Stomach (tissue), 19 donors: ENCODE measurements at regions of chr6 and their contacts with region 1.

Region 1: DNA sequence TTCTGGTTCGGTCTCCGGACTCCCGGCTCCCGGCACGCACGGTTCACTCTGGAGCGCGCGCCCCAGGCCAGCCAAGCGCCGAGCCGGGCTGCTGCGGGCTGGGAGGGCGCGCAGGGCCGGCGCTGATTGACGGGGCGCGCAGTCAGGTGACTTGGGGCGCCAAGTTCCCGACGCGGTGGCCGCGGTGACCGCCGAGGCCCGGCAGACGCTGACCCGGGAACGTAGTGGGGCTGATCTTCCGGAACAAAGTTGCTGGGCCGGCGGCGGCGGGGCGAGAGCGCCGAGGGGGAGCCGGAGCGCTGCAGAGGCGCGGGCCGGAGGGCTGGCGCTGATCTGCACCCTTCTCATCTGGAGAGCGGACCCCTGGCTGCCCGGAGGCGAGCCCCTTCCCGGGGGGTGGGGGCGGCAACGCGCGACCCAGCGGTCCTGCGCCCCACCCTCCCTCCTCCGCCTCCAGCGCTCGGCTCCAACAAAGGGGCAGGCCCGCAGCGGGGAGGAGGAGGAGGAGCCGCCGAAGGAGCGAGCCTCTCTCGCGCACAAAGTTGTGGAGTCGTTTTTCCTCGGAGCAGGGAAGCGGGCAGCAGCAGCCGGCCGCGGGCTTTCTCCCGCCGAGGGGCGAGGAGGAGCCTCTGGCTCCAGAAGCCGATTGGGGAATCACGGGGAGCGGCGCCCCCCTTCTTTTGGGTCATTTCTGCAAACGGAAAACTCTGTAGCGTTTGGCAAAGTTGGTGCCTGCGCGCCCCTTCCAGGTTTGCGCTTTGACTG is at the start of gene UTRN:
- DNase-seq: peak; percentile 75 to 93
- H3K4me3 ChIP-seq: peak within 1 kb of the TSS; percentile 73 to 91 (median 81)
- H3K27ac ChIP-seq: peak within 1 kb of the TSS; percentile 87 to 98 (median 96)
- H3K4me1 ChIP-seq: peaks cover 8 to 27% (median 18%) of the 10 kb centered on the region in 4 donors
- H3K27me3 ChIP-seq: no peaks in the 10 kb centered on the region
- CTCF ChIP-seq: no peak
- EP300 ChIP-seq: no peak
- POLR2A ChIP-seq: no peak
- total RNA-seq, gene UTRN: 60.3 to 218 (median 190) TPM

Region 2: DNA sequence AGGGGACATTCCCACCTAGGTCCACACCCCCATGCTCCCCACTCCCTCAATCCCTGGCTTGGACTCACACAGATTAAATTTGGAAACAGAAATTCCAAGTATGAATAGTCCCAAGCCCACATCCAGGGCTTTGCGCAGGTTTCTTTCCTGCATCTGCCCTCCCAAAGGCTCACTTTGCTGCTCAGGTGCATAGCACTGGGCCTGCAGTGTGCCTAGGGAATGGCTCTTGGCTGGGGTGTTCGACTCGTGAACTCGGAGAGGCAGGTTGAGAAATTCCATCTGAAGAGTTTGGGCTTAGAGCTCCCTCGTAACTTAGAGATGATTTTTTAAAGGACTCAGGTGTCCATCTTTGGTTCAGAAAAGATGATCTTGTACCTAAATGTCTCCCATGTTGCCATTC is 174.8 kb before region 1 on chr6:
- intact Hi-C with region 1: no loop called
- DNase-seq: no peak
- H3K4me3 ChIP-seq: no peak overlapping the region
- H3K27ac ChIP-seq: no peak overlapping the region
- H3K4me1 ChIP-seq: no peaks in the 10 kb centered on the region
- H3K27me3 ChIP-seq: no peaks in the 10 kb centered on the region
- CTCF ChIP-seq: no peak
- EP300 ChIP-seq: no peak
- POLR2A ChIP-seq: no peak

Region 3: DNA sequence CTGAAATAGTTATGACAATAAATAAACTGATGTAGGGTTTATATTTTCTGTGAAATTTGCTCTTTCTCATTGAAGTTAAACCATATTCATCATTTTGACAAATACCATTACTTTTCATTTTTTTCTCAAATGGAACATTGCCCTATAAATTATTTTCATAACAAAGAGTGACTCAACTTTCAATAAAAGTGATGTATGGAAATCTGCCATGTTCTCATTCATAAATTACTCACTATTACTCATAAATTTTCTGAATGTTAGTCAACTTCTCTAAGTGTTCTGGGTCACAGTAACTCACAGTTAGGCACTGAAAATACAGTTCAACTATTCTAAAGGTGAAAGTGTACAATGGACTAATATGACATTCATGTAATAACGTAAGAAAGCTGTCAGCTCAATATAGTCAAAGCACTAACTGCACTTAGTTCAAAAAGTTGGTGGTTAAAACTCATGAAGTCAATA is 153.7 kb before region 1 on chr6:
- intact Hi-C with region 1: no loop called
- DNase-seq: no peak
- H3K4me3 ChIP-seq: no peak overlapping the region
- H3K27ac ChIP-seq: no peak overlapping the region
- H3K4me1 ChIP-seq: no peaks in the 10 kb centered on the region
- H3K27me3 ChIP-seq: no peaks in the 10 kb centered on the region
- CTCF ChIP-seq: no peak
- EP300 ChIP-seq: no peak
- POLR2A ChIP-seq: no peak

Region 4: DNA sequence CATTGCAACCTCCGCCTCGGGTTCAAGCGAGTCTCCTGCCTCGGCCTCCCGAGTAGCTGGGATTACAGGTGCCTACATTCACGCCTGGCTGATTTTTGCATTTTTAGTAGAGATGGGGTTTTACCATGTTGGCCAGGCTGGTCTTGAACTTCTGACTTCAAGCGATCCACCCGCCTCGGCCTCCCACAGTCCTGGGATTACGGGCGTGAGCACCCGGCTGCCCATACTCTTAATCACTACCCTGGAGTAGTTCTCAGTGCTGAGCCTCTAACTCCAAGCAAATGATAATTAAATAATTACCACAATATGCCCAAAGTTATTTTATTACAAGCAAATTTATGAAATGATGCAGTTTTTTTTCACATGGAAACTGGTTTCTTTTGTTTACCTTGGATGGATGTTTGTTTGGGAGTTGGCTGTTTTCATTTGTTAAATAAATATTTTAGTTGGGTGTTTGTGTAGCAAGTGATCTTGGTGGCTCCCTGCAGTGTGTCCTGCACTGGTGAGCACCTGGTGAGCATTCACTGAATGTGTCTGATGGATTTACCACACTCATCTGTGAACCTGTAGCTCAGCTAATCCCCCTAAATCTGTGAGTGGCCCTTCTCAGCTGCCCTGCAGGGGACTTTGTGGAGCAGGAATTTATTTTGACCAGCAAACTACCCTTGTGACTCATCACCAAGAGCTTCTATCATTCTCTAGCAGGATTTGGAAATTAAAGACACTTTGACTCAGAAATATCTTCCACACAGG is 37.0 kb after region 1 on chr6:
- intact Hi-C with region 1: loop called (anchors 5 kb)
- DNase-seq: no peak
- H3K4me3 ChIP-seq: no peak overlapping the region
- H3K27ac ChIP-seq: peak overlapping the region in 4 of 5 donors; percentile 1 to 46 (median 14)
- H3K4me1 ChIP-seq: peaks cover 0 to 76% (median 50%) of the 10 kb centered on the region in 4 donors
- H3K27me3 ChIP-seq: no peaks in the 10 kb centered on the region
- CTCF ChIP-seq: no peak
- EP300 ChIP-seq: no peak
- POLR2A ChIP-seq: no peak